ENCODE measurements at regions of chr12 and their contacts with region 1.

Region 1: GRCh38 chr12:121128970-121129810 is 3.5 kb upstream of the P2RX7 start:
- DNase-seq: peak; percentile 99
- ATAC-seq: peak; percentile 91
- H3K4me3 ChIP-seq: peak overlapping the region; percentile 50
- H3K27ac ChIP-seq: peak overlapping the region; percentile 86
- H3K4me1 ChIP-seq: peaks cover 28% of the 10 kb centered on the region
- H3K27me3 ChIP-seq: no peaks in the 10 kb centered on the region
- CTCF ChIP-seq: no peak
- EP300 ChIP-seq: peak; percentile 76 to 87
- POLR2A ChIP-seq: peak; percentile 63
- RAD21 ChIP-seq: no peak

Region 2: DNA sequence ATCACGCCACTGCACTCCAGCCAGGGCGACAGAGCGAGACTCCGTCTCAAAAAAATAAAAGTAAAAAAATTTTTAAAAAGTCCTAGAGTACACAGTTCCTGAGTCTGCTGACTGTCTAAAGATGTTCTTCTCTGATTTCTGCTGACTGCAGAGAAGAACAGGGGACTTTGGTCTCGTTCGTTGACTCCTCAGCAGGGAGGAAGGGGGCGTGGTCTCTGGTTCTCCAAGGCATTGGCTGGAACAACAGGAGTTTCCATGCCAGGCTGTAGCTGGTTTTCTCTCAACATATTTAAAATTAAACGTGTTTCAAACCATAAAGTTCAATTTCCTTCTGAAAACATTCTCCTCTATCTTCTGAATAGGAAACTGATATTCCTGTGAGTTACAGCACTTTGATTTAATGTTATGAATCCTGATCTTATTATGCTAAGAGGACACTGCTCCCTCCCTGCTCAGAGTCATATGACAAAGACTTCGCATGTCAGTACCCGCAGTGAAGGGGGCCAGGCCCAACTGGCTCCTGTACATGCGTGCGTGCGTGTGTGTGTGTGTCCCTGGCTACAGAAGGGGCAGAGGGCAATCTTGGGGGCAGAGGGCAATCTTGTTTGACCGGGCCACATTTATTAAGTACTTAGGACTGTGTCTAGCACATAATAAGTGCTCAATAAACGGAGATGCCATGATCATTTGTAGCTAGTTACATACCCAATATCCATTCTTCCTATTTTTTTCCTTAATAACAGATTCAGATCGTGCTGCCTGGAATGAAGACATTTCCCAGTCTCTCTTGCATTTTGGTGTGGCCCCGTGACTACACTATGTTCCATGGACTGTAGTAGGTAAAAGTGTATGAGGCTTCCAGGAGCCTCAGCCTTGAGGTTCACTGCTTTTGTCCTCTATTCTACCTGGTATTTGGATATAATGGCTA is 167.3 kb before region 1 on chr12:
- CTCF ChIA-PET with region 1: no interaction called
- POLR2A ChIA-PET with region 1: no interaction called
- RAD21 ChIA-PET with region 1: no interaction called
- SMC1A ChIA-PET with region 1: no interaction called
- in situ Hi-C with region 1: no loop called
- intact Hi-C with region 1: no loop called
- DNase-seq: no peak
- ATAC-seq: no peak
- H3K4me3 ChIP-seq: no peak overlapping the region
- H3K27ac ChIP-seq: no peak overlapping the region
- H3K4me1 ChIP-seq: peaks cover 10% of the 10 kb centered on the region
- H3K27me3 ChIP-seq: no peaks in the 10 kb centered on the region
- CTCF ChIP-seq: no peak
- EP300 ChIP-seq: no peak
- POLR2A ChIP-seq: no peak
- RAD21 ChIP-seq: no peak

Region 3: DNA sequence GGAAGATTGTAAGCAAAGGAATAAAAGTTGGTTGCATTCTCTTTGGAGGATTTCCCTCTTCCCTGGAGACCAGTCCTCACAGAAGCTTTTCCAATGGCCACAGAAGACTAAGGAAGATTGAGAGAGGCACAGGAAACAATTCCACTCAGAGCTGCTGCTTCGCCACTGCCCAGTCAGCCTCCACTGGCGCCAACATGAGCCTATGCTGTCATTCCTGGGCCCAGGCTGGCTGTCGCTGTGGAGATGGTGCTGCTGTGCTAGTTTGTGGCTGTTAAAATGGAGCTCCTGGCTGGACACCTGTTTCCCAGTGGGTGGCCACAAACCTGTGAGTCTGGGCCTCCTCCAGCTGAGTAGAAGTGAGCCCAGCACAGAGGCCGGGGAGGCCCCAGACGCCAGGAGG is 10.1 kb after region 1 on chr12:
- CTCF ChIA-PET with region 1: no interaction called
- POLR2A ChIA-PET with region 1: interaction called, 11 read pairs
- RAD21 ChIA-PET with region 1: no interaction called
- SMC1A ChIA-PET with region 1: interaction called, 10 read pairs
- in situ Hi-C with region 1: no loop called
- intact Hi-C with region 1: no loop called
- DNase-seq: no peak
- ATAC-seq: no peak
- H3K4me3 ChIP-seq: no peak overlapping the region
- H3K27ac ChIP-seq: no peak overlapping the region
- H3K4me1 ChIP-seq: peaks cover 15% of the 10 kb centered on the region
- H3K27me3 ChIP-seq: no peaks in the 10 kb centered on the region
- CTCF ChIP-seq: no peak
- EP300 ChIP-seq: no peak
- POLR2A ChIP-seq: no peak
- RAD21 ChIP-seq: no peak

Region 4: GRCh38 chr12:121144416-121144914 is 15.3 kb after region 1 on chr12:
- CTCF ChIA-PET with region 1: interaction called, 3 read pairs
- POLR2A ChIA-PET with region 1: interaction called, 11 read pairs
- RAD21 ChIA-PET with region 1: no interaction called
- SMC1A ChIA-PET with region 1: interaction called, 10 read pairs
- in situ Hi-C with region 1: no loop called
- intact Hi-C with region 1: no loop called
- DNase-seq: no peak
- ATAC-seq: peak; percentile 77
- H3K4me3 ChIP-seq: no peak overlapping the region
- H3K27ac ChIP-seq: peak overlapping the region; percentile 67
- H3K4me1 ChIP-seq: peaks cover 25% of the 10 kb centered on the region
- H3K27me3 ChIP-seq: no peaks in the 10 kb centered on the region
- CTCF ChIP-seq: no peak
- EP300 ChIP-seq: no peak
- POLR2A ChIP-seq: no peak
- RAD21 ChIP-seq: no peak

Region 5: DNA sequence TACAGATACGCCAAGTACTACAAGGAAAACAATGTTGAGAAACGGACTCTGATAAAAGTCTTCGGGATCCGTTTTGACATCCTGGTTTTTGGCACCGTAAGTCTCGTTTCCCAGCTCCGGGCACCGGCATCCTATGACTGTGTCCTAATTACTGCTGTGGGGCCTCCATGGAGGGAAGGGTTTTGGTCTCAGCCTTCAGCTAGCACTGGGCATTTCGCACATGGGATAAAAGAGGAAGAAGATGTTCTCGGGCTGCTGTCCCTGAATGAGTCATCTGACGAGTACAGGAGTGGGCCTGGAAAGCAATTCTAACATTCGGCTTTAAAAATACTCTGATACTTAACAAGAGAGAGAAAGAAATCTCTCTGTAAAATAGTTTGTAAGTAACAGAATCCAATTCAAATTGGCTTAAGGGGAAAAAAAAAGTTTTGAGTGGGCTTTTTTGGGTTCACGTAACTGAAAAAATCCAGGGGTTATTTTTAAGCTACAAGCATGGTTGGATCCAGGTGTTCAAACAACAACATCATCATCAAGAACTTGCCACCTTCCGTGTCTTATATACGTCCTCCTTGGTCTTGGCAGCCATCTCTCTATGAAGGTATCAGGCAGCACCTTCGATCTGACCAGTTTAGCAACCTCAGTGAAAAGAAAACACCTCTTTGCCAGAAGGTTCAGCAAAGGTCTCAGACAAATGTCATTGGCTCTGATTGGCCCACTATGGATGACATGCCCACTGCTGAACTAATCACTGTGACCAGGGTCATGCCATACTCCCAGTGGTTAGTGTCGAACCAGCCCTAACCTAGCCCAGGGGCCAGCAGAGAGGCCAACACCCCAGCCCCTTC is 46.4 kb after region 1 on chr12:
- CTCF ChIA-PET with region 1: no interaction called
- POLR2A ChIA-PET with region 1: no interaction called
- RAD21 ChIA-PET with region 1: no interaction called
- SMC1A ChIA-PET with region 1: no interaction called
- in situ Hi-C with region 1: no loop called
- intact Hi-C with region 1: no loop called
- DNase-seq: no peak
- ATAC-seq: peak; percentile 88
- H3K4me3 ChIP-seq: no peak overlapping the region
- H3K27ac ChIP-seq: 0 out of 2 replicates have a peak overlapping the region, but pooled peaks have one; percentile 10
- H3K4me1 ChIP-seq: peaks cover 7% of the 10 kb centered on the region
- H3K27me3 ChIP-seq: no peaks in the 10 kb centered on the region
- CTCF ChIP-seq: no peak
- EP300 ChIP-seq: no peak
- POLR2A ChIP-seq: no peak
- RAD21 ChIP-seq: no peak

Region 6: GRCh38 chr12:121209624-121210572 is 80.7 kb after region 1 on chr12 and contains the start of gene P2RX4:
- CTCF ChIA-PET with region 1: interaction called, 4 read pairs
- POLR2A ChIA-PET with region 1: no interaction called
- RAD21 ChIA-PET with region 1: interaction called, 7 read pairs
- SMC1A ChIA-PET with region 1: interaction called, 10 read pairs
- in situ Hi-C with region 1: no loop called
- intact Hi-C with region 1: loop called (anchors 5 kb)
- DNase-seq: peak; percentile 44
- ATAC-seq: peak; percentile 92
- H3K4me3 ChIP-seq: peak within 1 kb of the TSS; percentile 71
- H3K27ac ChIP-seq: peak within 1 kb of the TSS; percentile 64
- H3K4me1 ChIP-seq: peaks cover 9% of the 10 kb centered on the region
- H3K27me3 ChIP-seq: no peaks in the 10 kb centered on the region
- CTCF ChIP-seq: peak; percentile 24 to 54 (median 50); a peak in 5 of 6 replicates
- EP300 ChIP-seq: no peak
- POLR2A ChIP-seq: peak; percentile 99
- RAD21 ChIP-seq: peak; percentile 58
- polyA plus RNA-seq, gene P2RX4: 9.0 to 11.3 TPM

Region 7: GRCh38 chr12:121214855-121215745 is 85.9 kb after region 1 on chr12:
- CTCF ChIA-PET with region 1: interaction called, 4 read pairs
- POLR2A ChIA-PET with region 1: no interaction called
- RAD21 ChIA-PET with region 1: interaction called, 7 read pairs
- SMC1A ChIA-PET with region 1: interaction called, 10 read pairs
- in situ Hi-C with region 1: no loop called
- intact Hi-C with region 1: loop called (anchors 5 kb)
- DNase-seq: no peak
- ATAC-seq: peak; percentile 50
- H3K4me3 ChIP-seq: no peak overlapping the region
- H3K27ac ChIP-seq: no peak overlapping the region
- H3K4me1 ChIP-seq: peaks cover 9% of the 10 kb centered on the region
- H3K27me3 ChIP-seq: no peaks in the 10 kb centered on the region
- CTCF ChIP-seq: no peak
- EP300 ChIP-seq: no peak
- POLR2A ChIP-seq: no peak
- RAD21 ChIP-seq: no peak

Region 8: GRCh38 chr12:121223292-121224285 is 94.4 kb after region 1 on chr12:
- CTCF ChIA-PET with region 1: no interaction called
- POLR2A ChIA-PET with region 1: interaction called, 3 read pairs
- RAD21 ChIA-PET with region 1: no interaction called
- SMC1A ChIA-PET with region 1: no interaction called
- in situ Hi-C with region 1: no loop called
- intact Hi-C with region 1: loop called (anchors 5 kb)
- DNase-seq: no peak
- ATAC-seq: peak; percentile 66
- H3K4me3 ChIP-seq: no peak overlapping the region
- H3K27ac ChIP-seq: no peak overlapping the region
- H3K4me1 ChIP-seq: peaks cover 16% of the 10 kb centered on the region
- H3K27me3 ChIP-seq: no peaks in the 10 kb centered on the region
- CTCF ChIP-seq: peak; percentile 40 to 64 (median 41); a peak in 5 of 6 replicates
- EP300 ChIP-seq: no peak
- POLR2A ChIP-seq: no peak
- RAD21 ChIP-seq: peak; percentile 40; the same call in 1 of the 2 replicates

Region 9: DNA sequence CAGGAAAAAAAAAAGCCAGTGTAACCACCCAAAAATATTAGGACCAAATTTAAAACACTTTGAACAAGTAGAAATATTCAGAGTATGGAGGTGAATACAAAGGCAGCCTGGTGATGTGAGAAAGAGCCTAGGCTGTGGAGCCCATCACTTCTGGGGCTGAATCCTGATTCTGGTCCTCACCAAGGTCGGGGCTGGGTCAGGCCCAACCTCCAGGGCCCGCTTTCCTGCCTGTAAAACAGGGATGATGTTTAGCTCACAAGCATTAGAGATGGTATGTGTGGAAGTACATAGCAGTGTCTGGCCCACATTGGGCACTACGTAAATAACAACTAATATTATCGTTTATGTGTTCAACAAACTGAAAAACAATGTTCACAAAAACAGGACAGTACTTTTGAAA is 175.1 kb after region 1 on chr12:
- CTCF ChIA-PET with region 1: no interaction called
- POLR2A ChIA-PET with region 1: no interaction called
- RAD21 ChIA-PET with region 1: no interaction called
- SMC1A ChIA-PET with region 1: no interaction called
- in situ Hi-C with region 1: no loop called
- intact Hi-C with region 1: no loop called
- DNase-seq: no peak
- ATAC-seq: no peak
- H3K4me3 ChIP-seq: no peak overlapping the region
- H3K27ac ChIP-seq: no peak overlapping the region
- H3K4me1 ChIP-seq: peaks cover 6% of the 10 kb centered on the region
- H3K27me3 ChIP-seq: no peaks in the 10 kb centered on the region
- CTCF ChIP-seq: no peak
- EP300 ChIP-seq: no peak
- POLR2A ChIP-seq: no peak
- RAD21 ChIP-seq: no peak

Measured in GM12878 (cell line).